ENCODE measurements at regions of chr19 and their contacts with region 1.

Region 1: GRCh38 chr19:50537762-50538230 is 24.1 kb upstream of the ASPDH start:
- DNase-seq: peak; percentile 58
- H3K4me3 ChIP-seq: no peak overlapping the region
- H3K27ac ChIP-seq: no peak overlapping the region
- H3K4me1 ChIP-seq: no peaks in the 10 kb centered on the region
- H3K27me3 ChIP-seq: no peaks in the 10 kb centered on the region
- CTCF ChIP-seq: peak; percentile 87

Region 2: GRCh38 chr19:50465986-50466771 is 71.6 kb before region 1 on chr19:
- CTCF ChIA-PET with region 1: no interaction called
- dilution Hi-C with region 1: no loop called
- in situ Hi-C with region 1: no loop called
- intact Hi-C with region 1: no loop called
- DNase-seq: no peak
- H3K4me3 ChIP-seq: no peak overlapping the region
- H3K27ac ChIP-seq: no peak overlapping the region
- H3K4me1 ChIP-seq: no peaks in the 10 kb centered on the region
- H3K27me3 ChIP-seq: no peaks in the 10 kb centered on the region
- CTCF ChIP-seq: no peak

Region 3: DNA sequence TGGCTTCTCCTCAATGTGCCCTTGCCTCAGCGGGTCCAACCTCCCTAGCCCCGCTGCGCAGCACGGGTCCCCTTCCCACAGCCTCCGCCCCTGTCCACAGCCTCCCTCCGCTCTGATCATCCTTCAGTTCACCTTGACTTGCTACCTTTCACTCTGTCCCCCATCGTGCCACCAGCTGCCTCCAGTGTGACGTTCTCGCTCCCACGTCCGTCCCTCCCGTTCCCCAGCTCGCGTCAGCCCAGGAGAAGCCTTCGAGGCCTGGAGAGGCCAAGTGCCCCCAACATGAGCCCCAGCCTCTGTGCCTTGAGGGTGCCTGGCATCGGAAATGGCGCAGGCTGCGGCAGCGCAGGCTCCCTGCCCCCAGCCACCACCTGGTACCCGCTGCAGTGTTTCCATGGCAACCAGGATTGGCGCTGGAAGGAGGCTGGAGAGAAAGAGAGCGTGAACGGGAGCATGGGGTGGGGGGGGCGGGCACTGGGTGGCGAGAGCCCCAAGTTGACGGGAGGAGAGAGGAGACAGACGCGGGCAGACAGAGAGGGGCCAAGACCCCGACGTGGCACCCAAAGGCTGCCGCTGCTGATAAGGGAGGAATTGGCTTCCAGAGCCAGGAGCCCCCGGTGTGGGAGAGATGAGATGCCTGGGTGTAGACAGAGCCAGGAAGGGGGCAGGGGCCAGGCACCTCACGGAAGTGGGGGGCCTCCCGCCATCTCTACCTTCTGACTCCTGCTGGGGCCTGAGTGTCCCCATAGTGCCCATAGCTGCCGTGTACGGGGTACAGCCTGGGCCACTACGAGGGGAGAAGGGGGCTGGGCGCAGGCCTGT is 23.2 kb before region 1 on chr19:
- CTCF ChIA-PET with region 1: no interaction called
- dilution Hi-C with region 1: no loop called
- in situ Hi-C with region 1: no loop called
- intact Hi-C with region 1: no loop called
- DNase-seq: no peak
- H3K4me3 ChIP-seq: no peak overlapping the region
- H3K27ac ChIP-seq: no peak overlapping the region
- H3K4me1 ChIP-seq: peaks cover 12% of the 10 kb centered on the region
- H3K27me3 ChIP-seq: no peaks in the 10 kb centered on the region
- CTCF ChIP-seq: no peak

Region 4: GRCh38 chr19:50556282-50557008 is 18.6 kb after region 1 on chr19:
- CTCF ChIA-PET with region 1: interaction called, 30 read pairs
- dilution Hi-C with region 1: no loop called
- in situ Hi-C with region 1: no loop called
- intact Hi-C with region 1: no loop called
- DNase-seq: peak; percentile 16
- H3K4me3 ChIP-seq: peak overlapping the region in 2 of 3 experiments; percentile 35
- H3K27ac ChIP-seq: no peak overlapping the region
- H3K4me1 ChIP-seq: peaks cover 4% of the 10 kb centered on the region
- H3K27me3 ChIP-seq: peaks cover 3% of the 10 kb centered on the region
- CTCF ChIP-seq: peak; percentile 66 to 78

Region 5: DNA sequence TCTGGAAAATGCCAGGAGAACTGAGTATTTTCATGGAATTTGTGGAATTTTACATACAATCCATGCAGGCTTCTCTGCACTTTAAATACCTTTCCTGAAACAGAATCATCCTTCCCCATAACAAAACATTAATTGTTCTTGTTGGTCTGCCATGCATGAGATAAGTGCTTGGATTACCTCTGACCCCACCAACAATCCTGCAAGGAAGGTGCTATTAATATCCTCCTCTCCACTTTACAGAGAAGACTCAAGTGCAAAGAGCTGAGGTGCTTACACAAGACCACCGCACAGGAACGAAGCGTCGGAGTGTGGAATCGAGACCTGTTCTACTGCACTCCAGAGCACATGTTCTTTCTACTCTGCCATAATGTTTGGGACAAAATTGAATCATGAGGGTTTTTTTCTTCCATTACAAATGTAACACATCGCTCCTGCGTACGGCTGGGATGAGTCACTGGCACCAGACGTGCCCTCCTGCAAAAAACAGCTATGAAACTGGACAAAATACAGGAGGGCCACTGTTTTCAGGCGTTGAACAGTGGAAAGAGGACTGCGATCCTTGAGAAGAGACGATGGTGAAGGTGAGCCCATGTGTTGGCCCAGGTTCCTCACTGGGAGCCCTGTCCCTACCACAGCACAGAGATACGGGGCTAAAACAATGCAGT is 43.3 kb after region 1 on chr19:
- CTCF ChIA-PET with region 1: no interaction called
- dilution Hi-C with region 1: loop called (anchors 5 kb)
- in situ Hi-C with region 1: no loop called
- intact Hi-C with region 1: no loop called
- DNase-seq: no peak
- H3K4me3 ChIP-seq: no peak overlapping the region
- H3K27ac ChIP-seq: no peak overlapping the region
- H3K4me1 ChIP-seq: no peaks in the 10 kb centered on the region
- H3K27me3 ChIP-seq: no peaks in the 10 kb centered on the region
- CTCF ChIP-seq: no peak

Region 6: GRCh38 chr19:50705422-50706019 is 167.7 kb after region 1 on chr19:
- CTCF ChIA-PET with region 1: no interaction called
- dilution Hi-C with region 1: loop called (anchors 5 kb)
- in situ Hi-C with region 1: no loop called
- intact Hi-C with region 1: loop called (anchors 1 kb)
- DNase-seq: peak; percentile 50
- H3K4me3 ChIP-seq: no peak overlapping the region
- H3K27ac ChIP-seq: no peak overlapping the region
- H3K4me1 ChIP-seq: no peaks in the 10 kb centered on the region
- H3K27me3 ChIP-seq: peaks cover 3% of the 10 kb centered on the region
- CTCF ChIP-seq: peak; percentile 68 to 84

Region 7: DNA sequence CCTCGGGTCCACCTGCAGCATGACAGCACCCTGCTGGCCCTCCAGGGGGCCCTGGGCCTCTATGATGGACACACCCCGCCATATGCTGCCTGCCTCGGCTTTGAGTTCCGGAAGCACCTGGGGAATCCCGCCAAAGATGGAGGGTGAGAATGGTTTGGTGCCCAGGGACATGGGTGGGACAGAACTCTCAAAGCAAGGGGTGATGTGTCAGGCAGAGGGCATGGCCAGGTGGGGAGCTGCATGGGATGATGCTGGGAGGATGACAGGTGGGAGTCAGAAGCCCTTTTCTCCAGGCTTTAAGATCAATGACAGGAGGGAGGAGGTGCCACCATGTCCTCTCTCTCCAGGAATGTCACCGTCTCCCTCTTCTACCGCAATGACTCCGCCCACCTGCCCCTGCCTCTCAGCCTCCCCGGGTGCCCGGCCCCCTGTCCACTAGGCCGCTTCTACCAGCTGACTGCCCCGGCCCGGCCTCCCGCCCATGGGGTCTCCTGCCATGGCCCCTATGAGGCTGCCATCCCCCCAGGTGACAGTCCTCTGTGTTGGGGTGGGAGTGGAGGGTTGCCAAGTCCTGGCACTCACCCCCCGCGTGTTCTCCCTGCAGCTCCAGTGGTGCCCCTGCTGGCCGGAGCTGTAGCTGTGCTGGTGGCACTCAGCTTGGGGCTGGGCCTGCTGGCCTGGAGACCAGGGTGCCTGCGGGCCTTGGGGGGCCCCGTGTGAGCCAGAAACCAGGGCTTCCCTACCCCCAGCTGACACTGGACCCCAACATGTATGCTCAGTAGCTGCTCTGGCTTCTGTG is 256.8 kb after region 1 on chr19:
- CTCF ChIA-PET with region 1: no interaction called
- dilution Hi-C with region 1: no loop called
- in situ Hi-C with region 1: loop called (anchors 10 to 25 kb)
- intact Hi-C with region 1: no loop called
- DNase-seq: peak; percentile 43
- H3K4me3 ChIP-seq: no peak overlapping the region
- H3K27ac ChIP-seq: no peak overlapping the region
- H3K4me1 ChIP-seq: no peaks in the 10 kb centered on the region
- H3K27me3 ChIP-seq: no peaks in the 10 kb centered on the region
- CTCF ChIP-seq: peak; percentile 20 to 47

Measured in mammary epithelial cell (primary cell).